HEK293 (cell line): ENCODE measurements at regions of chr5 and their contacts with region 1.

Region 1: GRCh38 chr5:39376293-39376714 is 12.0 kb upstream of the C9 start:
- H3K4me3 ChIP-seq: no peak overlapping the region
- H3K27ac ChIP-seq: no peak overlapping the region
- H3K4me1 ChIP-seq: no peaks in the 10 kb centered on the region
- CTCF ChIP-seq: peak; percentile 64

Region 2: DNA sequence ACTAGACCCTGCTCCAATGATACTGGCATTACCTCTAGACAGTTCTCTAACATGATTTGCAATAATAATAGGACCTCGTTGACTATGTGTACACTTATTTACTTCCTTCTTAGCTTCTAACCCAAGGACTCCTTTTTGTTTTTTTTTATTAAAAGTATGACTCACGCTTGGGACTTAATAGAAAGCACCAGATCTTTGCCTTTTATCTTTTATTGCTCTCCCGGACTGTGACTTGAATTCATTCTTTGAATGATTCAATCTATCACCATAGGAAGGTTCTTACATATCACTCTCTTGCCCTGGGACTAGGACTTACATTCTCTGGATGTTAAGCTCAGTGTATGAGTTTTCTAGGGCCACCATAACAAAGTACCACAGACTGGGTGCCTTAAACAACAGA is 21.0 kb before region 1 on chr5:
- CTCF ChIA-PET with region 1: interaction called, 10 read pairs
- POLR2A ChIA-PET with region 1: interaction called, 4 read pairs
- H3K4me3 ChIP-seq: no peak overlapping the region
- H3K27ac ChIP-seq: no peak overlapping the region
- H3K4me1 ChIP-seq: no peaks in the 10 kb centered on the region
- CTCF ChIP-seq: no peak

Region 3: GRCh38 chr5:39399135-39400036 is 23.1 kb after region 1 on chr5:
- CTCF ChIA-PET with region 1: interaction called, 18 read pairs
- POLR2A ChIA-PET with region 1: no interaction called
- H3K4me3 ChIP-seq: no peak overlapping the region
- H3K27ac ChIP-seq: no peak overlapping the region
- H3K4me1 ChIP-seq: 0 out of 2 replicates have a peak, but pooled peaks cover 5% of the 10 kb centered on the region
- CTCF ChIP-seq: no peak

Region 4: DNA sequence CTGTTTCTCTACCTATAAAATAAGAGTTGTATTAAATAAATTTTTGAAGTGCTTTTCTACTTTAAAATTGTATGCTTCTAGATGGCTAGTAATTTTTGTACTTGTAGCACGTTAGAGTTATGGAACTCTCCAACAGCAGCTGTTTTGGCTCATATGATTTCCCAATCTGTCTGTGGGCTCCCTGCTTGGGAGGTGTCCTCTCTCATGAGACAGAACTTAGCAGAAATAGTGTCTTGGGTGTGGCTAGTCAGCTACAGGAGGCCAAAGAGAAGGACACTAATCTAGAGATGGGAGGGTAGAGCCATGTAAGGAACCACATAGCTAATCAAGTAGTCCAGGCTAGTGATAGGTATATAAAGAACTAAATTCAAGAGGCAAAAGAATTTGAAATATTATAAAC is 126.8 kb after region 1 on chr5:
- CTCF ChIA-PET with region 1: interaction called, 11 read pairs
- POLR2A ChIA-PET with region 1: no interaction called
- H3K4me3 ChIP-seq: no peak overlapping the region
- H3K27ac ChIP-seq: no peak overlapping the region
- H3K4me1 ChIP-seq: 0 out of 2 replicates have a peak, but pooled peaks cover 2% of the 10 kb centered on the region
- CTCF ChIP-seq: no peak

Region 5: DNA sequence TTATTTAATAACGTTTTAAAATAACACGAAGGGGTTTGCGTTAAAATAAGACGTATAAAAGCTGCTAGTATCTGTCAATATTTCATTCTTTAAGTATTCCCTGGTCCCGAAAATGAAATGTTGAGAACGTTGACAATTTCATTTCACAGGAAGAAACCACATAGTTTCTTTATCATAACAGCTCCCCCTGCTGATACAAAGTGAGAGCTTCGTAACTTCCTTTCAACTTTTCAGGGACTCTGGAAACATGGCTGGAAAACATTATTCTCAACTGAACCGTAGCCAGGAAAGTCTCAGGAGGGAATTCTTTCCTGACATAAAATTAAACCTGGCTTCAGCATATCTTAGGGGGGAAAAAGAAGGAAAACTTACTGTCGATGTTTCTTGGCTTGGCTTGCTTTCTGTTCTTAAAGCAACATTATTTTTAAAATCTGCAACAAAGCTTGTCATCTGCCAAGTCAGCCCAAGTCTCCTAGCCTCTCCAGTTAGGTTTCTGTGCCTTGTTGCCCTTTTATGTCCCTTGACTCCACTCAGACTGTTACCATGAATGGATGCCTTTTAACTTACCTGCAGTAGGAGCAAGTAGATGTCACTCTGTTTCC is 171.3 kb after region 1 on chr5:
- CTCF ChIA-PET with region 1: interaction called, 137 read pairs
- POLR2A ChIA-PET with region 1: interaction called, 8 read pairs
- H3K4me3 ChIP-seq: no peak overlapping the region
- H3K27ac ChIP-seq: no peak overlapping the region
- H3K4me1 ChIP-seq: no peaks in the 10 kb centered on the region
- CTCF ChIP-seq: peak; percentile 35; the same call in 1 of the 2 replicates